ENCODE measurements at regions of chr20 and their contacts with region 1.

Region 1: GRCh38 chr20:48657475-48658470 is 170.0 kb downstream of the PREX1 start:
- DNase-seq: peak; percentile 74 to 86 (median 84)
- ATAC-seq: peak; percentile 76
- H3K4me3 ChIP-seq: no peak overlapping the region
- H3K27ac ChIP-seq: no peak overlapping the region
- H3K4me1 ChIP-seq: peaks cover 14% of the 10 kb centered on the region
- H3K27me3 ChIP-seq: peaks cover 0 to 4% of the 10 kb centered on the region in 2 donors
- CTCF ChIP-seq: peak; percentile 89 to 97 (median 95)
- POLR2A ChIP-seq: no peak

Region 2: GRCh38 chr20:48846498-48847485 is 189.0 kb after region 1 on chr20:
- intact Hi-C with region 1: no loop called
- DNase-seq: no peak
- ATAC-seq: no peak
- H3K4me3 ChIP-seq: no peak overlapping the region
- H3K27ac ChIP-seq: no peak overlapping the region
- H3K4me1 ChIP-seq: no peaks in the 10 kb centered on the region
- H3K27me3 ChIP-seq: no peaks in the 10 kb centered on the region
- CTCF ChIP-seq: no peak
- POLR2A ChIP-seq: no peak

Region 3: GRCh38 chr20:48902006-48902623 is 244.3 kb after region 1 on chr20:
- intact Hi-C with region 1: loop called (anchors 2 kb)
- DNase-seq: no peak
- ATAC-seq: no peak
- H3K4me3 ChIP-seq: no peak overlapping the region
- H3K27ac ChIP-seq: no peak overlapping the region
- H3K4me1 ChIP-seq: peaks cover 9% of the 10 kb centered on the region
- H3K27me3 ChIP-seq: peaks cover 0 to 4% of the 10 kb centered on the region in 2 donors
- CTCF ChIP-seq: no peak
- POLR2A ChIP-seq: no peak

Measured in body of pancreas (tissue), 4 donors.